ENCODE measurements at regions of chr1 and their contacts with region 1.

Region 1: DNA sequence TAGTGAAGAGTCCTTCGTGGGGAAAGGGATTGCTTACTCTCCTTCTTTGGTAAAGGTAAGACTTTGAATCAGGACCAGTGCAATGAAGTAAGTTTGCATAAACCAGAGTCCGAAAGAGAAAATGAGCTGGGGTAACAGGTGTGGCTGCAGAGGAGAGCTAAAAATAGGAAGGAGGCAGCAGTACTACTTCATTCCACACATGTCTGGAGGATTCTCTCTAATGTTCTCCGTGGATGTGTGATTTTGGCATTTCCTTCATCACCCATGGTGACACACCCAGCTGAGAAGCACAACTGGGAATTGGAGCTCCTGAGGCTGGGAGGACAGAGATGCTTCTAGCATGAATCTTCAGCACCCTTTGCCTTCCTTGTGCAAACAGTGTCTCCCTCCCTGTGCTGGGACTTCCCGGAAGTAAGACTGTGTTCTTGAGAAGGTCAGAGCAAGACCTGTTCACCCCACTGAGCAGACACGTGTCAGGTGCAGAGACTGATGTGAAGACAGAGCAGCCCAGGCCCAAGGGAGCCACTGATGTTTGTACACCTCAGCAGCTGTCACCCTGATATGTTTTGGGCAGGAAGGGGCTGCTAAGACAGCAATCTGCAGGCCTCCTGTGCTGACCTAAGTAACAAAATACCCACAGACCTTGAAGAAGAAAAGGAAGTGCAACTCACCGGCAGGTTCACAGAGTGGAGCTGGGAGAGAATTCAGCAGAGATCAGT is 13.3 kb downstream of the FCRL1 start:
- DNase-seq: peak; percentile 100
- H3K4me3 ChIP-seq: peak overlapping the region; percentile 58
- H3K27ac ChIP-seq: peak overlapping the region; percentile 97
- H3K4me1 ChIP-seq: peaks cover 79% of the 10 kb centered on the region
- CTCF ChIP-seq: no peak

Region 2: GRCh38 chr1:157512036-157512969 is 294.3 kb before region 1 on chr1:
- CTCF ChIA-PET with region 1: no interaction called
- POLR2A ChIA-PET with region 1: interaction called, 8 read pairs
- intact Hi-C with region 1: loop called (anchors 2 kb)
- DNase-seq: peak; percentile 92
- H3K4me3 ChIP-seq: peak overlapping the region; percentile 49
- H3K27ac ChIP-seq: peak overlapping the region; percentile 99
- H3K4me1 ChIP-seq: peaks cover 76% of the 10 kb centered on the region
- CTCF ChIP-seq: no peak

Region 3: DNA sequence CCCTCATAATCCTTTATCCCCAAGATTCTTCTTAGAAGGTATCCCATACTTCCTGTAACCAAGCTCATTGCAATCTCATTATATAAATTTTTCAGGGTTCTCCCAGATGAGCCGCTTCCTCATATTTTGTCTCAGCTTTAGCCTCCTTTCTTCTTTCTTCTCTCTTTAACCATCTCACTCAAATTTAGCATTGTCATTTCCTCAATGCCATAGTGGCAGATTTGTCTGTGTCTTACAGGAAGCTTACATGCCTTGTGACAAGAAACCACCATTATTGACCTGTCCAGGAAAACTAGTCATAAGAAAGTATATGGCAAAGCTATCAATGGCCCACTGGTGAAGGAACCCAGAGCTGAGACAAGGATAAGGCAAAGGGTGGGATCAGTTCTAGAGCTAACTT is 23.7 kb before region 1 on chr1:
- CTCF ChIA-PET with region 1: no interaction called
- POLR2A ChIA-PET with region 1: interaction called, 22 read pairs
- intact Hi-C with region 1: loop called (anchors 1 kb)
- DNase-seq: peak; percentile 70
- H3K4me3 ChIP-seq: peak overlapping the region; percentile 19
- H3K27ac ChIP-seq: peak overlapping the region; percentile 71
- H3K4me1 ChIP-seq: peaks cover 87% of the 10 kb centered on the region
- CTCF ChIP-seq: no peak

Region 4: GRCh38 chr1:157829711-157830110 is 23.1 kb after region 1 on chr1:
- CTCF ChIA-PET with region 1: no interaction called
- POLR2A ChIA-PET with region 1: interaction called, 15 read pairs
- intact Hi-C with region 1: no loop called
- DNase-seq: no peak
- H3K4me3 ChIP-seq: no peak overlapping the region
- H3K27ac ChIP-seq: no peak overlapping the region
- H3K4me1 ChIP-seq: peaks cover 37% of the 10 kb centered on the region
- CTCF ChIP-seq: no peak

Region 5: DNA sequence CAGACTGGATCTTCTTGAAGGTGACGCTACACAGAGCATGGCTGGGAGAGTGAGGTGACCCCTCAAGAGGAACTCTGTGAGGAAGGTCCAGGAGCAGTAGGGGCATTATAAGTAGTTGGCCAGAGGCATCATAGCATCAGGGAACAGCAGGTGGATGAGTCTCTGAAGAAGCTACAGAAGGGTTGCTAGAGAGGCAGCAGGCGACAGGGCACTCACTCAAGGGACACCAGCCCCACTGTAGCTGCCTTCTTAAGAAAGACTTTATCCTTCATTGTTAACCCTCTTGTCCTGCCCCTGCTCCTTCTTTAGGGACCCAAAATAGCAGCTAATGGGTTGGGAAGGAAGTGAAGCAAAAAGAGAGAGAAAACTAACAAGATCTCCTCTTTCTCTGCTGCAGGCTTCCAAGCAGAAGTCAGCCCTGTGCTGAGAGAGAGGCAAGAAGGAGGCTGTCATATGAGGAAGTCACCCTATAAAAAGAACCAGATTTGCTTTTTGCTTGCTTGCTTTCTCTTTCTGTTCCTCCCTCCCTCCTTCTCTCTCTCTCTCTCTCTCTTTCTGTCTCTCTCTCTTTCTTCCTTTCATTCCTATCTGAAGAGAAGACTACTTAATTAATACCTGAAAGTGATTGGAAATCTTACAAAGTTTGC is 42.8 kb after region 1 on chr1:
- CTCF ChIA-PET with region 1: no interaction called
- POLR2A ChIA-PET with region 1: interaction called, 14 read pairs
- intact Hi-C with region 1: loop called (anchors 1 kb)
- DNase-seq: peak; percentile 87
- H3K4me3 ChIP-seq: peak overlapping the region; percentile 56
- H3K27ac ChIP-seq: peak overlapping the region; percentile 90
- H3K4me1 ChIP-seq: peaks cover 63% of the 10 kb centered on the region
- CTCF ChIP-seq: no peak; the same call in 1 of the 2 replicates